ENCODE measurements at regions of chr15 and their contacts with region 1.

Region 1: DNA sequence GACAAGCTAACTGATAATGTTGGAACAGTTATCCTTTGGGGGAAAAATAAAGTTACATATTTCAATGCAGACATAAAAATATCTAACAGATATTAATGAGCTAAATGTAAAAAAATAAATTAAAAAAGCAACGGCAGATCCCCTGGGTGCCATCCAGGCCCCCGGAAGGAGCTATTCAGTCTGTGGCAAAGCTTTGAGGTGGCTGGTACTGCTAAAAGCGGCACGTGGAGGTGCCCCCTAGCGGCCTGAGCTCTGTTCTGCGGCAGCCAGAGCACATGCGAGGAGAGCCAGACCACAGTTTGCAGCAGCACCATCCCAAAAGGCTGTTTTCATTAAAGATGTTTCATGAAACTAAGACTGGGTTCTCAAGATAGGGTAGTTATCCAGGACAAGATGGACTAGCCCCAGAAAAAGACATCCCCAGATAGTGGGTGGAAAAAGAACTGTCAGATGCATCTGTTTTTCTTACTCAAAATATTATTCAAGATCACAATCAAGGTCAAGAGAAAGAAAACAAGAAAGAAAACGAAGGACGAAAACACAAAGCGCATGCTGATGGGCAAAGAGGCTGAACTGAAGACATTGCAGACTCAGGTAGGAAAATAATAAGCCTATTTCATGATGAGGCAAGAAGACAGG is 18.7 kb downstream of the AP3S2 start:
- DNase-seq: peak; percentile 86
- H3K4me3 ChIP-seq: no peak overlapping the region
- H3K27ac ChIP-seq: no peak overlapping the region
- H3K4me1 ChIP-seq: no peaks in the 10 kb centered on the region
- H3K27me3 ChIP-seq: no peaks in the 10 kb centered on the region
- CTCF ChIP-seq: peak; percentile 84 to 94 (median 92)
- POLR2A ChIP-seq: no peak

Region 2: GRCh38 chr15:89003865-89004725 is 871.0 kb before region 1 on chr15:
- intact Hi-C with region 1: no loop called
- DNase-seq: no peak
- H3K4me3 ChIP-seq: no peak overlapping the region
- H3K27ac ChIP-seq: no peak overlapping the region
- H3K4me1 ChIP-seq: no peaks in the 10 kb centered on the region
- H3K27me3 ChIP-seq: no peaks in the 10 kb centered on the region
- CTCF ChIP-seq: no peak
- POLR2A ChIP-seq: no peak

Region 3: DNA sequence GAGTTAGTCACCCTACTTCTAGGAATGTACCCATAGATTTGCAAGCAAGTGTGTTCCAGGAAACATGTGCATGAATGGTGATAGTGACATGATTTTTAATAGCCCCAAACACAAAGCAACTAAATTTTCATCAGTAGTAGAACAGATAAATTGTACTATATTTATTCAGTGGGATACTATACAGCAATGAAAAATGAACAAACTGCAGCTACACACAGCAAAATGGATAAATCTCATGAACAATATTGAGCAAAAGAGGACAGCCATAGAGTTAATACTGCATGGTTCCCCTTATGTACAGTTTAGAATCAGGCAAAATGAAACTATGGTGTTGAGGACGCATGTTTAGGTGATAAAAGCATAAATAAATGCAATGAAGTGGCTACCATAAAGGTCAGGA is 150.0 kb before region 1 on chr15:
- intact Hi-C with region 1: no loop called
- DNase-seq: no peak
- H3K4me3 ChIP-seq: no peak overlapping the region
- H3K27ac ChIP-seq: no peak overlapping the region
- H3K4me1 ChIP-seq: no peaks in the 10 kb centered on the region
- H3K27me3 ChIP-seq: no peaks in the 10 kb centered on the region
- CTCF ChIP-seq: no peak
- POLR2A ChIP-seq: no peak

Region 4: GRCh38 chr15:89760303-89761008 is 114.6 kb before region 1 on chr15:
- intact Hi-C with region 1: loop called (anchors 2 kb)
- DNase-seq: peak; percentile 74
- H3K4me3 ChIP-seq: no peak overlapping the region
- H3K27ac ChIP-seq: peak overlapping the region; percentile 83 to 92
- H3K4me1 ChIP-seq: peaks cover 6% of the 10 kb centered on the region
- H3K27me3 ChIP-seq: no peaks in the 10 kb centered on the region
- CTCF ChIP-seq: peak; percentile 96 to 97 (median 96)
- POLR2A ChIP-seq: no peak

Measured in prostate gland (tissue), 2 donors.